ENCODE measurements at regions of chr11 and their contacts with region 1.

Region 1: DNA sequence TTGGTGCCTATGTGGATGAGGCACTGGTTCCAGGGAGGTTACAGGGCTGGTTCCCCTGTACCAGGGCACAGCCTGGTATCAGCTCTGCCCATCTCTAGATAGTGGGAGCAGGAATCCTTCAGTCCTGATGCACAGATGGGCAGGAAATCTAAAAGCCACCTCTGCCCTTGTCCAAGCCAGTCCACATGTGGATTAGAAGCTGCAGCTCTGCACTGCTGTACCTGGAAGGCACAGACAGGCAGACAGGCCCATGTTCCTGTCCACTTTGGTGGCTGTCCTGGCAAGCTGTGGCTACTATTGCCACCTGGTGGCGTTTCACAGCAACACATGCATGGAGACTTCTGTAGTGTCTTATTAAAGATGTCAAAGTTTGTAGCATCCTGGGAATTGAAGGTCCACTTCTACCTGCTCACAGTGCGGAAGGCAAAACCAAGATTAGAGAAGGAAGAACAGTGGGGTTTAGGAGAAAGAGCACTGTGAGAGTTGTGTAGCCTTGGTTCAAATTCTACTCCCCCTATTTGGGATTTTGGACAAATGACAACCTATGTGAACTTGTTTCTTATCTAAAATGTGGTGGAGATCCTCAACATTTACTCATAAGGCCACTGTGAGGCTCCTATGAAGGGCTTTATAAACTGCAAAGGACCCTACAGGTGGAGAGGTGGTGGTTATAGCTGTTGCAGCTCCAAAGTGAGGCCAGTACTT is 30.1 kb downstream of the NAV2 start:
- DNase-seq: peak; percentile 80
- ATAC-seq: peak; percentile 83 to 91

Region 2: DNA sequence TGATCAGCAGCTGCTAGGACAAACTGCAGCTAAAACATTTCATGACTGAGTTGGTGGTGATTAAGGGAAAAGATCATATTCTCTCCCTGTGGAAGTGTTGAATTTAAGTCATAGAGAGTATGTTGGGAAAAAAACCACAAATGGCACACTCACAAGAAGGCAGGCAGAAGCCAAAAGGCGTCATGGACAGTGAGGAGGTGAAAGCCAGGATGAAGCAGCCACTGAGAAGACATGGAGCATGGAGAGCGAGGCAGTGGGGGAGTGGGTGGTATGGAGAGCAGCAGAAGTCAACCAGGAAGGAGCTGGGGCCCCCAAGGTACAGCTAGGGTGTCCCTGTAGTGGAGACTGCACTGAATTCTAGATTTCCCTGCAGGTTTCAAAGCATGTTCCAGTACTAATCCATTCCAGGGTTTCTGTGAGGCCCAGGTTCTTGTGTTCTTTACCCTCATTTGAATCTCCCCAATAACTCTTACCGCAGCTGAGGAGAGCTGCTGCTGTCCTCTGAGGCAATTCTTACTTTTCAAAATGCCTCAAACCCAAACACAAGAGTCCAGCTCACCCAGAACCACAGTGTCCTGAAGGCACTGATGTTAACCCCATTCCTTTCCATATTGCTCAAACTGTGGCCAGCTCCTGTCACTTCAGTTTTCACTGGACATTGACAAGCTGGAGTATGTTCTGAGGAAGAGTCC is 310.2 kb before region 1 on chr11:
- intact Hi-C with region 1: no loop called
- DNase-seq: no peak
- ATAC-seq: peak; percentile 39 to 61

Region 3: GRCh38 chr11:19561011-19561410 is 181.7 kb before region 1 on chr11:
- intact Hi-C with region 1: loop called (anchors 1 to 2 kb)
- DNase-seq: no peak
- ATAC-seq: no peak

Region 4: DNA sequence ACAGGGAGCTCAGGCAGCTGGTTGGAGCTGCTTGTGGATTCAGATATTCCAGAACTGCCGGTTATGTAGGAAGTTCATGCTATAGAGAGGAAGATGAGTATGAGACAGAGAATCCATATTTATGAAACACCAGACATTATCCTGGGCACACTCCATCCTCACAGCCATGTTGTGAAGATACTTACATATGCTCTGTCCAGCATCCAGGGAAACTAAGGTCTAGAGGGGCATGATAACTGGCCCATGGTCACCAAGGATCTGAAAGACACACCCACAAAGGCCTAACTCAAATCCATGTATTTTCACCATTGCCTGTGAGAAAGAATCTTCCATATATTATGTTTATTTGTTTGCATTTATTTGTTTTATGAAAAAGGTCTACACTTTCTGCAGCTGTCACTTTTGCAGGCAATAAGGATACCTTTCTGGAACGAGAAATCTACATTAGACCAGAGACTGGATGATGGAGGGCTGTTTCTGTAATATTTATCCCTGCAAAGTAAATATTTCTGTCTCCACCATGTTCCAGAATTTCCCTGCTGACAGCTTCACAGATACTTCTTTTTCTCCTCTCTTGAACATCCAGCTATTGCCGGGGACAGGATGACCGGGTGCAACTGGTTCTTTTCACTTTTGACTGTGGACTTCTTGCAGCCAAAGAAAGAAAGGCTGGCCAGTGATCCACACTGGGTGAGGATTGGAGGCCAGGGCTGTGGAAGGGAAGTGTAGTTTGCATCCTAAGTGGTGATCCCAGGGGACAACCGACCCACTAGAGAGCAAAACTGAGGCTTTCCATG is 176.0 kb before region 1 on chr11:
- intact Hi-C with region 1: loop called (anchors 1 to 2 kb)
- DNase-seq: no peak
- ATAC-seq: no peak

Region 5: DNA sequence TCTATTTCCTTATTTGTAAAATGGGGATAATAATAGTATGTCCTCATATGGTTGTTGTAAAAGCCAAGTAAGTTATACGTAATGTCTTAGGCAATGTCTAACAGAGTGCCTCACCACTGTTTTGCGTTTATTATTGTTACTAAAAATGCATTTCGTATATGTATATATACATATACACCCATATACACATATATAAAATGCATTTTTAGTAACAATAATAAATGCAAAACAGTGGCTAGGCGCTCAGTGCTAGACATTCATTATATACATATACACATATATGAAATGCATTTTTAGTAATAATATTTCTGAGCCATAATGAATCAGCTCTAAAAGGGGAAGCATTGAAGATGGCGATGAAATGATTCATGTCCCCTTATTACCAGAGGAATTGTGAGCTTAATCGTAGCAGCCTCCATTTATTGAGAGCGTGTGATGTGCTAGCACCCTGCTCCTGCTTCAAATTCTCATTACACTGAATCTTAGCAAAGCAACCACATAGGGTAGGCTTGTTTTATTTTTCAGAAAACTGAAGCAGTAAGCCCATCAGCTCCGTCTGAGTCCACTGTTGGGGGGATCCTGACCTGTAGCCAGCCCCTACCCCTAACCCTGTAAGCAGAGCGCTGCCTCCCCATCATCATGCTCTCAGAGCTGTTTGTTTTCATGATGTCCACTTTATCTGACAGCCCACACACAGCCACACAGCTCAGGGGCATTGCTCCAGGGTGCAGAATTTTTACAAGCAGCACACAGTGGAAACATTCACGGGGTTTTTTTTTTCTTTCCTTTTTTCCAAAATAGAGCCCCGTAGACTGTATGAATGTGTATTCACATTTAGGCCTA is 127.2 kb before region 1 on chr11:
- intact Hi-C with region 1: no loop called
- DNase-seq: no peak
- ATAC-seq: peak in 1 of 2 donors; percentile 25

Region 6: DNA sequence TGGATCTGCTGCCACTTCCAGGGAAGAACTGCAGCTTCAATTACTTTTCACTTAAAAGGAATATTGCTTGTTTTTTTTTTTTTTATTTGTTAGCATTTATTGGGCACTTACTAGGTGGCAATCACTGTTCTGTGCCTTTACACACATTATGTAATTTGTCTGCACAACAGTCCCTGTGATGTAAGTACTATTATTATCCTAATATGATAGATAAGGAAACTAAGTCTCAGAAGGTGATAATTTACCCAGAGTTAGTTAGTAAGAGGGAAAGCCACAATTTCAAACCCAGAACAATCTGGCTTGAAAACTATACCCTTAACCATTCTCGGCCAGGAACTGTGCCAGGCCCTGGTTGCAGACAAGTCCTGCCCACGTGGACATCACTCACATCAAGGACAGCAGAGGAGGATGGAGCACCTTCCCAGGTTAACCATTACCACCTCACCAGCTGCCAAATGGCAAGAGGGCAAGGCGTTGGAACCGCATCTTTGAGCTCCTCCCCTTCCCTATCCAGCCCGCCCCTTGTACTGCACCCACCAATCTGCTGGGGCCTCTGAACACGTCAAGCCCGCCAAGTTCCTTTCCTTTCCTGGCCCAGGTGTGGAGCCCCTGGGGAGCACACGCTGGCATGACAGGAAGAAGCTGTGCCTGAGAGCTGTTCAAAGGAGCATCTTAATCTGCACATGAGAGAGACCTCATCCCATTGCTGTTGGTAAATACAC is 48.3 kb after region 1 on chr11:
- intact Hi-C with region 1: no loop called
- DNase-seq: no peak
- ATAC-seq: no peak

Region 7: GRCh38 chr11:19903620-19904069 is 160.9 kb after region 1 on chr11:
- intact Hi-C with region 1: loop called in 1 of 2 experiments (anchors 5 kb)
- DNase-seq: peak; percentile 75
- ATAC-seq: peak; percentile 64 to 72

Measured in left cardiac atrium (tissue), 4 donors.